ENCODE measurements at regions of chr10 and their contacts with region 1.

Region 1: DNA sequence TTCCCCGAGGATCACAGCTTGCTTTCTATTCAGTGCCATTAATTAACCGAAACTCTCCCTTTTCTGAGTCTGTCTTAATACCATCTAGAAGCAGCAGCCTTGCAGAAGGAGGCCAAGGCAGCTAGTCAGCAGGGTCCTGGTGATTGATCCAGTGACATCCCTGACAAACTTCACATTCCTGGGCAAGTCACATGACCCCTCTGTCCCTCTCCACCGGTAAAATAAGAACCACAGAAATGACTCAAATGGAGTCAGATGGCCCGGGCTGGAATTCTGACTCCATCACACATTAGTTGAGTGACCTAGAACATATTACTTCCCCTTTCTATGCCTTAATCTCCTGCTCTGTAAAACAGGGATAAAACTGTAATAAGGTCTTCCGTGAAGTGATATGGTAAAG is 17.2 kb upstream of the ACSL5 start:
- H3K4me3 Mint-ChIP-seq: no peak overlapping the region
- H3K27ac Mint-ChIP-seq: no peak overlapping the region
- H3K4me1 Mint-ChIP-seq: no peaks in the 10 kb centered on the region
- H3K27me3 Mint-ChIP-seq: no peaks in the 10 kb centered on the region

Region 2: DNA sequence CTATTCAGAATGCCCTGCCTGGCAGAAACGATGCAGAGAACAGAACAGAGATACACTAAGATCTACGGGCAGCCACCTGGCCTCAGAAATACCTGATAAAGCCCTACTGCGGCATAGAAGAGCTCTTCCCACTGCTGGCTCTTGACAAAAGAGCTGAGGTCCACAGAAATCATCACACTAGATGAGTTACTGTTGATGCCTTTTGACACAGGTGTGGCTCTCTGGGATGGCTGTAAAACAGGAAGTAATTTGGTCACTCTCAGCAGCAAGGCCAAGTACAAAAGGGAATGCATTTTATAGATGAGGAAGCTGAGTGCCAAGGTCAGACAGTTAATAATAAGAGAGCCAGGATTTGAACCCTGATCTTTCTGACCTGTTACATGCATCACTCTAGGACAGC is 17.7 kb before region 1 on chr10:
- intact Hi-C with region 1: loop called (anchors 1 kb)
- H3K4me3 Mint-ChIP-seq: no peak overlapping the region
- H3K27ac Mint-ChIP-seq: no peak overlapping the region
- H3K4me1 Mint-ChIP-seq: peaks cover 9% of the 10 kb centered on the region
- H3K27me3 Mint-ChIP-seq: peaks cover 3% of the 10 kb centered on the region

Measured in dendritic cell treated with granulocyte-macrophage colony-stimulating factor and Interleukin-4, amounts not matched to agents 40 ng/mL and 50 ng/mL, for 4 days (primary cell).